ENCODE measurements at regions of chr1 and their contacts with region 1.

Region 1: GRCh38 chr1:15323351-15323988 is 76.4 kb downstream of the FHAD1 start:
- DNase-seq: peak; percentile 63
- H3K4me3 Mint-ChIP-seq: no peak overlapping the region
- H3K27ac Mint-ChIP-seq: no peak overlapping the region
- H3K4me1 Mint-ChIP-seq: no peaks in the 10 kb centered on the region
- H3K27me3 Mint-ChIP-seq: no peaks in the 10 kb centered on the region
- CTCF ChIP-seq: peak; percentile 85

Region 2: GRCh38 chr1:15430787-15431570 is 107.5 kb after region 1 on chr1:
- CTCF ChIA-PET with region 1: interaction called, 20 read pairs
- intact Hi-C with region 1: loop called (anchors 1 kb)
- DNase-seq: peak; percentile 74
- H3K4me3 Mint-ChIP-seq: no peak overlapping the region
- H3K27ac Mint-ChIP-seq: no peak overlapping the region
- H3K4me1 Mint-ChIP-seq: peaks cover 9% of the 10 kb centered on the region
- H3K27me3 Mint-ChIP-seq: no peaks in the 10 kb centered on the region
- CTCF ChIP-seq: peak; percentile 92

Region 3: GRCh38 chr1:15501208-15502032 is 177.9 kb after region 1 on chr1:
- CTCF ChIA-PET with region 1: no interaction called
- intact Hi-C with region 1: loop called (anchors 5 kb)
- DNase-seq: peak; percentile 65
- H3K4me3 Mint-ChIP-seq: no peak overlapping the region
- H3K27ac Mint-ChIP-seq: no peak overlapping the region
- H3K4me1 Mint-ChIP-seq: no peaks in the 10 kb centered on the region
- H3K27me3 Mint-ChIP-seq: no peaks in the 10 kb centered on the region
- CTCF ChIP-seq: peak; percentile 68